Right cardiac atrium (tissue), 5 donors: ENCODE measurements at regions of chr17 and their contacts with region 1.

Region 1: GRCh38 chr17:68697850-68698361 is 96.7 kb upstream of the FAM20A start:
- DNase-seq: no peak
- ATAC-seq: peak; percentile 32 to 57
- H3K4me3 ChIP-seq: no peak overlapping the region
- H3K27ac ChIP-seq: no peak overlapping the region
- H3K4me1 ChIP-seq: no peaks in the 10 kb centered on the region
- H3K27me3 ChIP-seq: no peaks in the 10 kb centered on the region

Region 2: GRCh38 chr17:68634403-68634802 is 63.5 kb before region 1 on chr17:
- intact Hi-C with region 1: loop called in 1 of 4 experiments (anchors 10 kb)
- DNase-seq: no peak
- ATAC-seq: no peak
- H3K4me3 ChIP-seq: no peak overlapping the region
- H3K27ac ChIP-seq: no peak overlapping the region
- H3K4me1 ChIP-seq: no peaks in the 10 kb centered on the region
- H3K27me3 ChIP-seq: no peaks in the 10 kb centered on the region

Region 3: GRCh38 chr17:68906638-68907037 is 208.7 kb after region 1 on chr17:
- intact Hi-C with region 1: no loop called
- DNase-seq: no peak
- ATAC-seq: no peak
- H3K4me3 ChIP-seq: no peak overlapping the region
- H3K27ac ChIP-seq: no peak overlapping the region
- H3K4me1 ChIP-seq: peaks cover 9% of the 10 kb centered on the region
- H3K27me3 ChIP-seq: no peaks in the 10 kb centered on the region

Region 4: DNA sequence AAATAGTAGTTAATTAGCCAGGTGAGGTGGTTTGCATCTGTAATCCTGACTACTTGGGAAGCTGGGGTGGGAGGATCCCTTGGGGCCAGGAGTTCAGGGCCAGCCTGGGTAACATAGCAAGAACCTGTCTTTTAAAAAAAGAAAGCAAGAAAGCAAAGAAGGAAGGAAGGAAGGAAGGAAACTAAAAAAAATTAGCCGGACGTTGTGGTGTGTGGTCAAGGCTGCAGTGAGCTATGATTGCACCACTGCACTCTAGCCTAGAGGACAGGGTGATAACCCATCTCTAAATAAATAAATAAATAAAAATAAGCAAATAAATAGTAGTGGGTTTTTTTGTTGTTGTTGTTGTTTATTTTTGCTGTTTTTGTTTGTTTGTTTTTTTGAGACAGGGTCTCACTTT is 677.3 kb after region 1 on chr17:
- intact Hi-C with region 1: no loop called
- DNase-seq: no peak
- ATAC-seq: no peak
- H3K4me3 ChIP-seq: no peak overlapping the region
- H3K27ac ChIP-seq: no peak overlapping the region
- H3K4me1 ChIP-seq: no peaks in the 10 kb centered on the region
- H3K27me3 ChIP-seq: no peaks in the 10 kb centered on the region